Psoas muscle (tissue), 8 donors: ENCODE measurements at regions of chr17 and their contacts with region 1.

Region 1: DNA sequence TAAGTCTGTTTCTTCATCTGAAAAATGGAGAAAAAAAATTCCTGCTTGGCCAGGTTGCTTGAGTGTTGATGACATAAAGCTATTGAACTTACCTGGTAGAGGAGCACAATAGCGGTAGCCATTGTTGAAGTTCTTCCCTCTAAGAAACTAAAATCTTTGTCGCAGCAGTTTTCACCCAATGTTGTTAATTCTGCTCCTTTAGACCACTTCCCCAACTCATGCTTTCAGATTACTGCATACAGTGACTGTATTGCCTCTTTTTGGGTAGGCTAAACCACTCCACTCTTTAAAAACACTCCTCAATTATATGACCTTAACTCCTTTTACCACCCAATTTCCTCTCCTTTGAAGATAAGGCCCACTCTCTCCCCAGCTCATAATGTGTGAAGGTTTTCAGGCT is 35.7 kb upstream of the CCL2 start:
- DNase-seq: no peak
- ATAC-seq: no peak
- H3K4me3 ChIP-seq: no peak overlapping the region
- H3K27ac ChIP-seq: no peak overlapping the region
- H3K4me1 ChIP-seq: no peaks in the 10 kb centered on the region
- H3K27me3 ChIP-seq: no peaks in the 10 kb centered on the region
- CTCF ChIP-seq: no peak

Region 2: GRCh38 chr17:34254651-34255380 is 35.4 kb after region 1 on chr17 and contains the start of gene CCL2:
- intact Hi-C with region 1: loop called in 1 of 2 experiments (anchors 5 kb)
- DNase-seq: peak; percentile 62 to 68
- ATAC-seq: peak; percentile 46 to 56 (median 52)
- H3K4me3 ChIP-seq: peak within 1 kb of the TSS; percentile 63
- H3K27ac ChIP-seq: peak within 1 kb of the TSS; percentile 58
- H3K4me1 ChIP-seq: peaks cover 34% of the 10 kb centered on the region
- H3K27me3 ChIP-seq: peaks cover 0 to 12% (median 0%) of the 10 kb centered on the region in 3 donors
- CTCF ChIP-seq: no peak
- total RNA-seq, gene CCL2: 5.0 to 28.3 (median 17.2) TPM

Region 3: GRCh38 chr17:34269969-34270368 is 50.6 kb after region 1 on chr17 and contains the start of gene CCL7:
- intact Hi-C with region 1: loop called in 1 of 2 experiments (anchors 5 kb)
- DNase-seq: no peak
- ATAC-seq: no peak
- H3K4me3 ChIP-seq: no peak within 1 kb of the TSS
- H3K27ac ChIP-seq: no peak within 1 kb of the TSS
- H3K4me1 ChIP-seq: no peaks in the 10 kb centered on the region
- H3K27me3 ChIP-seq: peaks cover 0 to 5% (median 0%) of the 10 kb centered on the region in 3 donors
- CTCF ChIP-seq: no peak
- total RNA-seq, gene CCL7: 0.28 to 0.66 TPM in 2 of 4 donors, not detected in the others

Region 4: DNA sequence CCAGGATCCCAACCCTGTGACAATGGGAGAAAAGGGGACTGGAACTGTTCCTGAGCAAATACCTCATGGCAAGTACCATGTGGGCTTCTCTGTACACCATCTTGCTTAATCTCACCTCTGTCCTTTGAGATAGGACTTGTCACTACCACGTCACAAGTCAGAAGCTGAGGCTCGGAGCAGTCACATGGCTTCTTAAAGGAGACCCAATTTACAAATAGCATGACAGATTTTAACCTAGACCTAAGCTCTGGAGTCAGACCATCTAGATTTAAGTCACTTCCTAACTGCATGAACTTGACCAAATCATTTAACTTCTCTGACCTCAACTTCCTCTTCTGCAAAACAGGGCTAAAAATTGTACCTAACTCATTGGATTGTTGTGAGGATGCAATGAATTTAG is 179.6 kb after region 1 on chr17:
- intact Hi-C with region 1: no loop called
- DNase-seq: no peak
- ATAC-seq: no peak
- H3K4me3 ChIP-seq: no peak overlapping the region
- H3K27ac ChIP-seq: no peak overlapping the region
- H3K4me1 ChIP-seq: no peaks in the 10 kb centered on the region
- H3K27me3 ChIP-seq: peaks cover 0 to 9% (median 0%) of the 10 kb centered on the region in 3 donors
- CTCF ChIP-seq: no peak